ENCODE measurements at regions of chr1 and their contacts with region 1.

Region 1: GRCh38 chr1:62131093-62131725 is 63.4 kb upstream of the L1TD1 start:
- DNase-seq: peak; percentile 45
- H3K4me3 Mint-ChIP-seq: no peak overlapping the region
- H3K27ac Mint-ChIP-seq: no peak overlapping the region
- H3K4me1 Mint-ChIP-seq: no peaks in the 10 kb centered on the region
- H3K27me3 Mint-ChIP-seq: no peaks in the 10 kb centered on the region

Region 2: DNA sequence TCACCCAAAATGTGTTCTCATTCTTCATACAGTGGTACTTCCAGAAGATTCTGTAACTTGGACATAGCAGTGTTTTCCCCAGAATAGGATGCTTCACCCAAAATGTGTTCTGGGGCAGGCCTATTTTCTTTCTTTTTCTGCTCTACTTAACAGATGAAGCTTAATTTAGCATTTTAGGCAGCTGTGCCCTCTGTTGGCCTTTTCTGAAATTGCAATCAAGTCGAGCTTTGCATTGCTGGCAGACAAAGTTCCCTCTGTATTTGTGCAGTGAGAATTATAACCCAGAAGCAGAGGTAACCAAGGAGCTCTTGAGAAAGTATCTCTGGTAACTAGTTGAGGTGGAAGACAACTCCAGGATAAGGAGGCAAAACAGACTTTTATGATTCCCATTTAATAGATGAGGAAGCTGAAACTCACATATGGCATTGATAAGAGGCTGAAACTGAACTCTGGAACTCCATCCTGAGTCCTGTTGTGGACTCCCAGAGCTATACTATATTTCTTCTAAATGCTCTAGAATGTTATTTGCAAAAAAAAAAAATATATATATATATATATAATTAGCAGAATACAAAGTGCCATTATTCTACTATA is 13.1 kb after region 1 on chr1:
- CTCF ChIA-PET with region 1: interaction called, 32 read pairs
- POLR2A ChIA-PET with region 1: no interaction called
- intact Hi-C with region 1: no loop called
- DNase-seq: peak; percentile 43
- H3K4me3 Mint-ChIP-seq: no peak overlapping the region
- H3K27ac Mint-ChIP-seq: no peak overlapping the region
- H3K4me1 Mint-ChIP-seq: no peaks in the 10 kb centered on the region
- H3K27me3 Mint-ChIP-seq: no peaks in the 10 kb centered on the region